Sigmoid colon (tissue), 7 donors: ENCODE measurements at regions of chr9 and their contacts with region 1.

Region 1: DNA sequence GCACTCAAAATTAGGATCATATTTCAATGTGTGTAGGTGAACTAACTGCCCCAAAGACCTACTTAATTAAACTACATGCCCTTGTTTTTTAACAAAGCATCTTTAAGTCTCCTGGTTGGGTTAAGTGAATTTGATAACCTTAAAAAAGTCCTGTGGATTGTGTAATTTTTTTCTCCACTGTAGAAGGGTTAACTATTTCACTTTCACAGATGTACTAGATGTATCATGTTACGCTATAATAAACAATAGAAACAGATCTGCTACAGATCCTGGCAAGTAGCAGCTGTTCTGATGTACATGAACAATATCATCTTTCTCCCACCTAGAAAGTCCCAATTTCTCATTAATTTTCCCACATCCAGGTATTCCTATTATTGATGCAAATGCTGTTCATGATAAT is 18.9 kb downstream of the KIF24 start:
- DNase-seq: no peak
- H3K4me3 ChIP-seq: no peak overlapping the region
- H3K27ac ChIP-seq: no peak overlapping the region
- H3K4me1 ChIP-seq: no peaks in the 10 kb centered on the region
- H3K27me3 ChIP-seq: no peaks in the 10 kb centered on the region
- CTCF ChIP-seq: no peak
- EP300 ChIP-seq: no peak
- POLR2A ChIP-seq: no peak

Region 2: DNA sequence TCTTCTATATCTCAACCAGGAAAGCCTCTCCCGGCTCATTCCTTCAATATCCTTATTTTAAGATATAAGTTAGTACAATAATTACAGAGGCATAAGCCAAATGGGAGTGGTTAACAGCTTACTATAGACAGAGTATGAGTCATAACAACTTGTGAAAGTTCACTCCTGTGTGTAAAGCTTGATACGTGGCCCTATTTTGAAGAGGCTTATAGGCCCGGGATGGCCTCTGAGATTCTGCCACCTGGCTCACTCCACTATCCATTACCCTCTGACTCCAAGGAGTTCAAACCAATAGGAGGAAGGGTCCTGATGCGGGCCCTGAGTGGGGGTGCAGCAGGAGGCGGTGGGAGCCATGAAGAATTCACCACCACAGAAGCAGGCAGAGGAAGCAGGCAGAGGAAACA is 1179.7 kb before region 1 on chr9:
- intact Hi-C with region 1: loop called (anchors 10 kb)
- DNase-seq: peak; percentile 52
- H3K4me3 ChIP-seq: no peak overlapping the region
- H3K27ac ChIP-seq: no peak overlapping the region
- H3K4me1 ChIP-seq: peaks cover 0 to 32% (median 10%) of the 10 kb centered on the region in 4 donors
- H3K27me3 ChIP-seq: no peaks in the 10 kb centered on the region
- CTCF ChIP-seq: no peak
- EP300 ChIP-seq: no peak
- POLR2A ChIP-seq: no peak

Region 3: DNA sequence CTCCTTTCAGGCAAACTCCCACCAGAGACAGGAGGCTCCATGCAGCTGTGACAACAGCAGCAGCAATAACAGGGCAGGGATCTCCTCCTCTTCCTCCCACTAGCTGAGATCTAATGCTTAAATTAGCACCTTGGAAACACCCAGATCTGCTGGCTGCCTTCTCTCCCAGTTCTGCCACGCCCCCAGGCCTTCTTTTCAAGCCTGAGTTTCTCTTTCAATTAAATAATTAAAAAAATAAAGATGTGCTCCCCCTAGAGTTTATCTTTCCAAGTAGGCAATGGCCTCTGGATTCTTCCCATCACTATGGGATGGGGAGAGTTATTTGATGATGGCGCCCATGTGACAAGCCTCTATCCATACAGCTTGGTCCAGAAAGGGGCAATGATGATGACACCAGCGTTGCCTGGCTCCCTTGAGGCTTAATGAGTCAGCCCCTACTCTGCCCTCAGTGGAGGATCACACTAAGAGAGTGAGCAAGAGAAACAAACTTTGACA is 144.4 kb after region 1 on chr9:
- intact Hi-C with region 1: no loop called
- DNase-seq: no peak
- H3K4me3 ChIP-seq: no peak overlapping the region
- H3K27ac ChIP-seq: peak overlapping the region in 1 of 4 donors; percentile 12
- H3K4me1 ChIP-seq: peaks cover 0 to 40% (median 23%) of the 10 kb centered on the region in 4 donors
- H3K27me3 ChIP-seq: no peaks in the 10 kb centered on the region
- CTCF ChIP-seq: no peak
- EP300 ChIP-seq: no peak
- POLR2A ChIP-seq: no peak

Region 4: DNA sequence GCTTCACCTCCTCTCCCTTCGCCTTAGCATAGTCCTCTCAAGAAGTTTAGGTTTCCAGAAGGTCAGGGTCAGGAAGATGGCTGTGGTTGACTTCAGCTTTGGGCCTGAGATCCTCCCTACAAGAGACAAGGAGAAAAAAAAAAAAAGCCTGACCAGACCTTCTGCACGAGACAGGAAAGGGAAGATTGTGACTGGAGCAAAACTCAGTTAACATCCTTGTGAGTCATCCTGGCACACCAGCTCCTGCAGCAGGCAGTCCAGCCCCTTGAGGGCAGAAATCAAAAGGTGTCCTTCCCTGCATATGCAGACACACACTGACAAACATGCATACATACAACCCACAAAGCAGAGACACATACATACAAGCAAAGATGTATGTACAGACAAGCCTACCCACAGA is 230.6 kb after region 1 on chr9:
- intact Hi-C with region 1: no loop called
- DNase-seq: peak; percentile 25
- H3K4me3 ChIP-seq: no peak overlapping the region
- H3K27ac ChIP-seq: no peak overlapping the region
- H3K4me1 ChIP-seq: no peaks in the 10 kb centered on the region
- H3K27me3 ChIP-seq: peaks cover 0 to 10% (median 0%) of the 10 kb centered on the region in 3 donors
- CTCF ChIP-seq: no peak
- EP300 ChIP-seq: no peak
- POLR2A ChIP-seq: no peak